ENCODE measurements at regions of chr3 and their contacts with region 1.

Region 1: DNA sequence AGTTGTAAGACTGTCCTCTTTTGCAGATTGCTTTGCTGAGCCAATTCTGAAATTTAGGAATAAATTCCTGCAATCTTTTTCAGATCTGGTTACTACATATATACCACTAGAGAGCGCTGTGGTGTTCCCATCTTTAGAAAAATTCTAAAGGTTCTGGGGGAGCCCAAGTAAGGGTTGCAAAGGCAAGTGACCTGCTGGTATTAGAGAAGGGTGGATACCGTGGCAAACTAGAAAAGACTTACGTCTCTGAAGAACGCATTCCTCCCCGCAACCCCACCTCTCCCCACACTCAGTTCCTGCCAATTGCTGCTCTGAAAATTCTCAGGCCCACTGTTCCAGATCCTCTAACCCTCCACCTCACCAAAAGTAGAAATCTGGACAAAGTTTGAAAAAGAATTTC is 48.5 kb downstream of the EFHB start:
- DNase-seq: no peak
- ATAC-seq: no peak

Region 2: DNA sequence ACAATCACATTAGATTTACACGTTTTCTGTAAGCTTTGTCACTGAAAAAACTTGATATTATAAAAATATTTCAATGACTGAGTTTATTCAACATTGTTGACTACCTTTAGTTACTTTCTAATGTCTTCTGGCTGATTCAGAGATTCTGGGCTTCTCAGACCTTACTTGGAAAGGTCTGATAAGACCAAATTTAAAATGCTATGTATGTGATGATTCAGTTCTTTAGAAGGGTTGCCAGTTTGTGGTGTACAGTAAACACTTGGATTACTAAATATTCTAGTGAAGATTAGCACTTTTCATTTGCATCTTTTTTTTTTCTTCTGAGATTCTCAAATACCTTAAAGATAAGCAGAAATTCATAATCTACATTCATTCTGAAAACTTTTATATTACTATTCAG is 250.8 kb after region 1 on chr3:
- intact Hi-C with region 1: loop called (anchors 5 kb)
- DNase-seq: no peak
- ATAC-seq: no peak

Measured in left ventricle myocardium superior (tissue), 1 donor.